ENCODE measurements at regions of chr2 and their contacts with region 1.

Region 1: DNA sequence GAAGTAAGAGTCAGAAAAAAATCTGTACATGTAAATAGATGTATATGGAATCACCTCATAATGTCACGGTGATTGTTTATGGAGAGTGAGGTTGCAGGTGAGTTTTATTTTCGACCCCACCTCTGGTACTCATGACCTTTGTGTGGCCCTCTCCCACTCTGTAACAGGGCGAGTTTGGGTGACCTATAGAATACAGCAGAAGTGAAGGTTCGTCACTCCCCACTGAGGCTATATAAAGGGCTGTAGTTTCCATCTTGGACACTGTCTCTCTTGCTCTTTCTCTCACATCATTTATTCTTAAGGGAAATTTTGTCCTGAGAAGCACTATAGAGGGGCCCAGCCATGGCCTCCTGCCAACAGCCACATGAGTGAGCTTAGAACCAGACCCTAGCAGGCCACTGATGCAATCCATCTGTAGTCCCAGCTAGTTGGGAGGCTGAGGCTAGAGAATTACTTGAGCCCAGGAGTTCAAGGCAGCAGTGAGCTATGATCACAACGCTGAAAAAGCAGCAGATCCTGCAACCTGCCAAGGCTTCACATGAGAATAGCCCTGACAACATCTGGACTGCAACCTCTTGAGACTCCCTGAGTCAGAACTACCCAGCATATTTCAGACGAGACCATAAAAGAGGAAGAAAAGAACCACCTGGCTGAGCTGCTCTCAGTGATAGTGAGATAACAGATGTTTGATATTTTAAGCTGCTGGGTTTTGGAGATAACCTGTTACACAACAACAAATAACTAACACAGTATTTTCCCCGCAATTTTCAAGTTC is 74.3 kb upstream of the SLC1A4 start:
- DNase-seq: no peak
- H3K4me3 ChIP-seq: no peak overlapping the region
- H3K27ac ChIP-seq: peak overlapping the region in 1 of 4 donors; percentile 32
- H3K4me1 ChIP-seq: peaks cover 0 to 12% (median 4%) of the 10 kb centered on the region in 3 donors
- H3K27me3 ChIP-seq: no peaks in the 10 kb centered on the region
- CTCF ChIP-seq: no peak
- POLR2A ChIP-seq: no peak

Region 2: DNA sequence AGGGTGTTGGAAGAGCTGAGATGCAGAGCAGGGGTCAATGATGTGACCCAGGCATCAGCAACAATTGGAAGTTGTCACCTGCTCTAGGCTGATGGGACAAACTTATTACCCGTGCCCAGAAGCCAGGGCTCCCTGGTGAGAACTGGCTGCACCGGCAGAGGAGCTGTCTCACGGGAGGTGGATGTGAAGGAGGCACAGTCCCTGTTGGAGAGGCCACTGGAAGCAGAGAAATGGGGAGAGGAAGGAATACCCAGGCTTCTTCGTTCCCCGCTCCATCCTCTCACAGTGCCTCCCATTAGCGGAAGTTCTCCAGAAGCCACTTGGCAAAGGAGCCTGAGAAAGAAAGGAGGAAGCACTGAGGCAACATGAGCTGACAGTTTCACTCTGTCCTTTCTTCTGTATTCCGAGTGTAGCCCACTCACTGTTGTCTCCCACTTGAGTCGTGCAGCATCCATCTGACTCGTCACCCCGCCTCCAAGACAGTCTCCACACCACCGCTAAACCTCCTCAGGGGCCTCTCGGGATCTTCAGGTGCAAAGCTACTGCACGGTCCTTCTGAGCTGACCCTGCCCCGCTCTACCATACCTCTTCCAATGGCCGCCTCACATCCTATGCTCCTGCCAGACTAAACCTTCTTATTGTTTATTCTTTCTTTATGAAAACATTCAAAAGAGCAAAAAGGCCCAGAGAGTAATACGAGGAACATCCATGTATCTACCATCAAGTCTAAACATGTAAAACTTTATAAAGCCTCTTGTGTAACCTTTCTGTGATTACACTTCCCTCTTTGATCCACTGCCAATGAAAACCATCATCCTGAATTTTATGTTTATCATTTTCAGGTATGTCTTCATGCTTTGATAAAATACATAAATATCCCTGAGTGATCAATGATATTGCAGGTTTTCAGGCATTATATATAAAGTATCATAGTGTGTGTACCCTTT is 409.9 kb before region 1 on chr2:
- intact Hi-C with region 1: no loop called
- DNase-seq: no peak
- H3K4me3 ChIP-seq: no peak overlapping the region
- H3K27ac ChIP-seq: no peak overlapping the region
- H3K4me1 ChIP-seq: peaks cover 0 to 8% (median 0%) of the 10 kb centered on the region in 3 donors
- H3K27me3 ChIP-seq: peaks cover 0 to 2% (median 0%) of the 10 kb centered on the region in 4 donors
- CTCF ChIP-seq: no peak
- POLR2A ChIP-seq: no peak

Region 3: DNA sequence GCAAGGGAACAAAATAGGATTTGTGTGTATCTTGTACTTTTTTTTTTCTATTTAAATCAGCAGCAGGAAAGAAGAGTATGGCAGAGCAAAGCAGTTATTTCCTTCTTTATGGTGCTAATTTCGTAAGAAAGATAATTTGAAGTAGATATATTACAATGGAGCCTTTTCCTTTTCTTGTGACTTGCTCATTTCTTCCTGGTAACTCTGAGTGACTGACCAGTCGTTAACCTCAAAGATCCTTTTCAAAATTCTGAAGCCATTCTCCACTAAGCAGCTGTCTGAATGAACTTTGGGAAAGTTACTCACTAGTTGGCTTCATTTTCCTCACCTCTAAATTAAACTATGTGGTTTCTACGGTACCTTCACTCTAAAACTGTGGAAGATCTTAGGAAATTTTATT is 366.2 kb before region 1 on chr2:
- intact Hi-C with region 1: no loop called
- DNase-seq: no peak
- H3K4me3 ChIP-seq: no peak overlapping the region
- H3K27ac ChIP-seq: no peak overlapping the region
- H3K4me1 ChIP-seq: peaks cover 0 to 12% (median 0%) of the 10 kb centered on the region in 3 donors
- H3K27me3 ChIP-seq: no peaks in the 10 kb centered on the region
- CTCF ChIP-seq: no peak
- POLR2A ChIP-seq: no peak

Region 4: GRCh38 chr2:64825831-64826491 is 89.0 kb before region 1 on chr2:
- intact Hi-C with region 1: no loop called
- DNase-seq: no peak
- H3K4me3 ChIP-seq: no peak overlapping the region
- H3K27ac ChIP-seq: no peak overlapping the region
- H3K4me1 ChIP-seq: peaks cover 2 to 3% (median 3%) of the 10 kb centered on the region in 3 donors
- H3K27me3 ChIP-seq: no peaks in the 10 kb centered on the region
- CTCF ChIP-seq: no peak
- POLR2A ChIP-seq: no peak

Region 5: GRCh38 chr2:65040400-65041261 is 125.7 kb after region 1 on chr2:
- intact Hi-C with region 1: loop called (anchors 2 kb)
- DNase-seq: peak; percentile 8
- H3K4me3 ChIP-seq: peak overlapping the region in 1 of 4 donors; percentile 45
- H3K27ac ChIP-seq: no peak overlapping the region
- H3K4me1 ChIP-seq: peaks cover 0 to 7% (median 0%) of the 10 kb centered on the region in 3 donors
- H3K27me3 ChIP-seq: no peaks in the 10 kb centered on the region
- CTCF ChIP-seq: peak; percentile 93 to 98 (median 96)
- POLR2A ChIP-seq: no peak

Measured in esophagus squamous epithelium (tissue), 5 donors.